CD8-positive, alpha-beta T cell (primary cell): ENCODE measurements at regions of chr18 and their contacts with region 1.

Region 1: GRCh38 chr18:48940854-48941611 is 9.7 kb downstream of the SMAD7 start:
- DNase-seq: peak; percentile 74 to 99 (median 90)
- ATAC-seq: peak; percentile 81
- H3K4me3 ChIP-seq: peak overlapping the region; percentile 20 to 49
- H3K4me3 Mint-ChIP-seq: peak overlapping the region; percentile 82
- H3K27ac ChIP-seq: peak overlapping the region; percentile 53 to 80
- H3K27ac Mint-ChIP-seq: peak overlapping the region; percentile 96
- H3K4me1 ChIP-seq: peaks cover 81% of the 10 kb centered on the region
- H3K4me1 Mint-ChIP-seq: peaks cover 93% of the 10 kb centered on the region
- H3K27me3 ChIP-seq: no peaks in the 10 kb centered on the region
- H3K27me3 Mint-ChIP-seq: no peaks in the 10 kb centered on the region
- CTCF ChIP-seq: no peak

Region 2: DNA sequence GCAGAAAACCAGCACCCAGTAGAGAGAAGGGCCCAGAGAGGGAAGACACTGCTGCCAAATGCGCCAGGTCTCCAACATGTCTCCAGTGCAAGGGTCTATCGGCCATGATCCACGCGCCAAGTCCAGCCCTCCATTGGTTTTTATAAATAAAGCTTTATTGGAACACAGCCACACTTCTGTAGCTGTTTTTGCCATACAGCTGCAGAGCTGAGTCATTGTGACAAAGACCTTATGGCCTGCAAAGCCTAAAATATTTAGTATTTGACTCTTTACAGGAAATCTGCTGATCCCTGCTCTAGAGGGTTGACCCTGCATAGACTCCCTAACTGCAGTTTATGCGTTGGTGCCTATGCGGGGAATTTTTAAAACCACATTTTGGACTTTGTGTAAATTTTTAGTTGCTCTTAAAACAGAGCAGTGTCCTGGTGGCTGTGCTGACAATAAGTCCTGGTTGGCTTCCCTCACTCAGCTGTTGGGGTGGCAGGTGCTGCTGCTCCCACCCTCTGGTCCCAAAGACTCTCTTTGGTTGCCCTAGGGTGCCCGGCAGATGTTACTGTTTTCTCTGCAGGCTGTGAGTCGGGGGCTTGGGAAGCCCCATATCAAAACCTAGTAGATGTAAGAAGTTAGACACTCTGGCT is 247.3 kb before region 1 on chr18:
- CTCF ChIA-PET with region 1: no interaction called
- POLR2A ChIA-PET with region 1: no interaction called
- intact Hi-C with region 1: no loop called
- DNase-seq: no peak
- ATAC-seq: no peak
- H3K4me3 ChIP-seq: no peak overlapping the region
- H3K4me3 Mint-ChIP-seq: no peak overlapping the region
- H3K27ac ChIP-seq: no peak overlapping the region
- H3K27ac Mint-ChIP-seq: no peak overlapping the region
- H3K4me1 ChIP-seq: no peaks in the 10 kb centered on the region
- H3K4me1 Mint-ChIP-seq: no peaks in the 10 kb centered on the region
- H3K27me3 ChIP-seq: no peaks in the 10 kb centered on the region
- H3K27me3 Mint-ChIP-seq: no peaks in the 10 kb centered on the region
- CTCF ChIP-seq: no peak

Region 3: DNA sequence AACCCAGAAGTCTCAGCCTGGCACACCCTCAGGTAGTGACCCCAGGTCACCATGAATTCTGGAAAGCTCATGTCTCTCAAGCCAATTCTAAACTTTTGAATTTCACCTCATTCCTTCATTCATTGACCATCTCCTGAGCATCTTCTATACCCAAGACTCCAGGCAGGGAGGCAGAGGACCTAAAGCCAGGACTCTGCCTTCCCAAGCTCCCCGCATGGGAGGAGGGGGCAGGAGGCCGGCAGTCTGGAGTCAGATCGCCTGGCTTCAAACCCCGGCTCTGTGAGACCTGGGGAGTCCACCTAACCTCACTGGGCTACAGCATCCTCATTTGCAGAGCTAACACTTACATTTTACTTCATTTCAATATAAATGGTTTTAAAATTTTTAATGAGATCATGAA is 49.3 kb before region 1 on chr18:
- CTCF ChIA-PET with region 1: no interaction called
- POLR2A ChIA-PET with region 1: no interaction called
- intact Hi-C with region 1: no loop called
- DNase-seq: no peak
- ATAC-seq: no peak
- H3K4me3 ChIP-seq: no peak overlapping the region
- H3K4me3 Mint-ChIP-seq: no peak overlapping the region
- H3K27ac ChIP-seq: no peak overlapping the region
- H3K27ac Mint-ChIP-seq: no peak overlapping the region
- H3K4me1 ChIP-seq: no peaks in the 10 kb centered on the region
- H3K4me1 Mint-ChIP-seq: peaks cover 2% of the 10 kb centered on the region
- H3K27me3 ChIP-seq: no peaks in the 10 kb centered on the region
- H3K27me3 Mint-ChIP-seq: no peaks in the 10 kb centered on the region
- CTCF ChIP-seq: no peak

Region 4: DNA sequence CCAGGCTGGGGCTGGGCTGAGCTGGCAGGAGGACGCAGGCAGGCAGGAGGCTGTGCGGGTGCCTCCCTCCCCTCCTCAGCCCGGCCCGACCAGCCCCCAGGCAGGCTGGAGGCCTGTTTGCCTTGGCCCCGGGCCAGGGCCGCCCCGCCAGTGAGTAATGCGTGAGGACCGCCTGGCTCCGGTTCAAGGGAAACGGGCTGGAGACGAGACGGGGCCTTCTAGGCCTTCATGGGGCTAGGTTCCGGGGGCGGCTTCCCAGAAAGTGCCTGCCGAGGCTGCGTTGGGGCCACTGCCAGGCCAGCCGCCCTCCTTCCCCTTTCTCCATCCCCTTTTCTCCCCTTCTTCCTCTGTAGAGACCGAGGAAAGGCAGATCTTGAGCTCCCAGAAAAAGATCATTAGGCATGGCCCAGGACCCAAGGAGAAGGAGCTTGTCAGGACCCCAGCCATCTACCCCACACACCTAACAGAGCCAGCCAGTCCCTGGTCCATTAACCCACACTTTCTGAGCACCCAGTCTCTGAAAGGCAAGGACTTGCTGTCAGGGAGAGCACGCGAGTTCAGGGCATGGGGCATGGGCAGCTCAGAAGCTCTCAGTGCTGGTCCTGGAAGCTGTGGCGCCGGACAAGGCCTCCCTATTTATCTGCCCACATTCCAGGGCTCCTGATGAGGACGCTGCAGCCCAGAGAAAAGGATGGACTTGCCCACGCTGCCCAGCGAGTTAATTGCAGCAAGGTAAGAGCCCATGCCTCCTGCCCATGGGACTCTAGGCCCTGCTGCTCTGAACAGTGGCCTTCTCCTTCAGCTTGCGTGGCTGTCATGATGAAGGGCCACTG is 38.8 kb before region 1 on chr18:
- CTCF ChIA-PET with region 1: no interaction called
- POLR2A ChIA-PET with region 1: no interaction called
- intact Hi-C with region 1: no loop called
- DNase-seq: no peak
- ATAC-seq: no peak
- H3K4me3 ChIP-seq: no peak overlapping the region
- H3K4me3 Mint-ChIP-seq: no peak overlapping the region
- H3K27ac ChIP-seq: no peak overlapping the region
- H3K27ac Mint-ChIP-seq: no peak overlapping the region
- H3K4me1 ChIP-seq: peaks cover 6% of the 10 kb centered on the region
- H3K4me1 Mint-ChIP-seq: peaks cover 10% of the 10 kb centered on the region
- H3K27me3 ChIP-seq: no peaks in the 10 kb centered on the region
- H3K27me3 Mint-ChIP-seq: no peaks in the 10 kb centered on the region
- CTCF ChIP-seq: no peak

Region 5: DNA sequence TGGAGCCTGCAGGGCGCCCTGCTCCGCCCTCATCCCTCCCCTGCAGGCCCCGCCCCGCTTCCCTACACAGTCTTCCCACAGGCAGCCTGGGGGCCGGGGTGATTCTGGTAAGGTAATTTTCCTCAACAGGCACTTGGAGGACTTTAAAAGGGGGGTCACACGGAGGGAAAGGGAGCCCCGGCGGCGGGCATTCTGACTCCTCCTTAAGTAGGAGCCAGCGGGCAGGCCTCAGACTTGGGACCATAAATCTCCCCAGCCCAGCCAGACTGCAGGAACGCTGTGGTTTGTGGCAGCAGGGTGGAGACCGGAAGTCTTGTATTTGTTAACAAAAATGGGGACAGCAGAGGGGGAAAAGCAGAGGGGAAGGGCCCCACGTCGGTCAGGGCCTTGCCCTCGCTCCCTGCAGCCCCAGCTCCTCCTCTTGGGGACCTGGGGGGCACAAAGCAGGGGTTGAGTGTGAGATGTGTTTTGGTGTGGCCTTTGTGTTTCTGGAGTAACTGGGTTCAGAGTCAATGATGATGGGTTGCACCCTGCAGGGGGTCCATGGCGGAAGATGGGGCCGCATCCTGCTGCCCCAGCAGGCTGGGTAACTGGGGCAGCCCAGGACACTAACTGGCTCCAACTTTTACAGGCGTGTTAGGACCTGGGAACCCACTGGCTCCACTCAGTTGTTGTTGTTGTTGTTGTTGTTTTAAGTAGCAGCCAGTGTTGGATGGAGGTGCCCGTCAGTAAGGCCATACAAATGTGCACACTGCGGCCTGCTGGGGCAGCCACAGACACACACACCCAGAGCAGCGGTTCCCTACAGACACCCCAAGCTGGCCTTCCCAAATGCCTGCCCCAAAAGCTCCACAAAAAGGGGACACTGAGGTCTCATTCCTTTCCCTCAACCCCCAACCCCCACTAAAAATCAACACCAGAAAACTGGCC is 18.0 kb before region 1 on chr18:
- CTCF ChIA-PET with region 1: interaction called, 6 read pairs
- POLR2A ChIA-PET with region 1: interaction called, 12 read pairs
- intact Hi-C with region 1: loop called in 1 of 2 experiments (anchors 1 kb)
- DNase-seq: peak in 2 of 9 experiments; percentile 51 to 54
- ATAC-seq: no peak
- H3K4me3 ChIP-seq: peak overlapping the region in 1 of 2 experiments; percentile 12
- H3K4me3 Mint-ChIP-seq: peak overlapping the region; percentile 70
- H3K27ac ChIP-seq: peak overlapping the region in 1 of 2 experiments; percentile 50
- H3K27ac Mint-ChIP-seq: peak overlapping the region; percentile 72
- H3K4me1 ChIP-seq: peaks cover 47% of the 10 kb centered on the region
- H3K4me1 Mint-ChIP-seq: peaks cover 67% of the 10 kb centered on the region
- H3K27me3 ChIP-seq: no peaks in the 10 kb centered on the region
- H3K27me3 Mint-ChIP-seq: no peaks in the 10 kb centered on the region
- CTCF ChIP-seq: no peak

Region 6: GRCh38 chr18:48928787-48929186 is 12.2 kb before region 1 on chr18:
- CTCF ChIA-PET with region 1: interaction called, 6 read pairs
- POLR2A ChIA-PET with region 1: interaction called, 12 read pairs
- intact Hi-C with region 1: loop called in 1 of 2 experiments (anchors 1 kb)
- DNase-seq: peak; percentile 60 to 91 (median 83)
- ATAC-seq: peak; percentile 92
- H3K4me3 ChIP-seq: no peak overlapping the region
- H3K4me3 Mint-ChIP-seq: peak overlapping the region; percentile 69
- H3K27ac ChIP-seq: peak overlapping the region in 1 of 2 experiments; percentile 70
- H3K27ac Mint-ChIP-seq: peak overlapping the region; percentile 91
- H3K4me1 ChIP-seq: peaks cover 67% of the 10 kb centered on the region
- H3K4me1 Mint-ChIP-seq: peaks cover 92% of the 10 kb centered on the region
- H3K27me3 ChIP-seq: no peaks in the 10 kb centered on the region
- H3K27me3 Mint-ChIP-seq: no peaks in the 10 kb centered on the region
- CTCF ChIP-seq: no peak

Region 7: DNA sequence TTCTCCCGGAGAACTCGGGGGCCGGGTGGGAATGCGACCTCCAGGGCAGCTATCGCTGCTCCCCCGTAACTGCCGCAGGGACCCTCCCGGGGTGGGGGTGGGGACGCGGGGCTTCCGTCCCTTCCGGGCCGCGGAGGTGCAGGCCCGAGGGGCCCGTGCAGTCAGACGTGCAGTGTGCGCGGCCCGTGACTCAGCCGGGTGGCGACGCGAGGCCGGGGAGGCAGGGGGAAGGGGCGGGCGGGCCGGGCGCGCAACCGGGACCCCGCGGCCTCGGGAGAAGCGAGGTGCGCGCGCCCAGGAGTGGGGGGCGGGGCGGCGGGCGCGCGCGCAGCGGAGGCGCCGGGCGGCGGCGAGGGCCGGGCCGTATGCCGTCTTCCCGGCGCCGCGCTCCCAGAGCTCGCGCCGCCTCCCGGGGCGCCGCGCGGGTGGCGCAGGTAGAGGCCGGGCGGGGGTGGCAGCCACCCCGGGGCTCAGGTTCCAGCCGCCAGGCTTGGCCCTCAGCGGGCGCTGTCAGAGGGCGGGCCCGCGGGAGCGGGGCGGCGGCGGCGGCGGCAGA is 34.7 kb after region 1 on chr18:
- CTCF ChIA-PET with region 1: no interaction called
- POLR2A ChIA-PET with region 1: no interaction called
- intact Hi-C with region 1: loop called in 1 of 2 experiments (anchors 5 kb)
- DNase-seq: peak in 8 of 9 experiments; percentile 28 to 77 (median 58)
- ATAC-seq: peak; percentile 77
- H3K4me3 ChIP-seq: peak overlapping the region; percentile 48 to 50
- H3K4me3 Mint-ChIP-seq: peak overlapping the region; percentile 59
- H3K27ac ChIP-seq: no peak overlapping the region
- H3K27ac Mint-ChIP-seq: no peak overlapping the region
- H3K4me1 ChIP-seq: peaks cover 11% of the 10 kb centered on the region
- H3K4me1 Mint-ChIP-seq: peaks cover 7% of the 10 kb centered on the region
- H3K27me3 ChIP-seq: no peaks in the 10 kb centered on the region
- H3K27me3 Mint-ChIP-seq: peaks cover 29% of the 10 kb centered on the region
- CTCF ChIP-seq: no peak

Region 8: DNA sequence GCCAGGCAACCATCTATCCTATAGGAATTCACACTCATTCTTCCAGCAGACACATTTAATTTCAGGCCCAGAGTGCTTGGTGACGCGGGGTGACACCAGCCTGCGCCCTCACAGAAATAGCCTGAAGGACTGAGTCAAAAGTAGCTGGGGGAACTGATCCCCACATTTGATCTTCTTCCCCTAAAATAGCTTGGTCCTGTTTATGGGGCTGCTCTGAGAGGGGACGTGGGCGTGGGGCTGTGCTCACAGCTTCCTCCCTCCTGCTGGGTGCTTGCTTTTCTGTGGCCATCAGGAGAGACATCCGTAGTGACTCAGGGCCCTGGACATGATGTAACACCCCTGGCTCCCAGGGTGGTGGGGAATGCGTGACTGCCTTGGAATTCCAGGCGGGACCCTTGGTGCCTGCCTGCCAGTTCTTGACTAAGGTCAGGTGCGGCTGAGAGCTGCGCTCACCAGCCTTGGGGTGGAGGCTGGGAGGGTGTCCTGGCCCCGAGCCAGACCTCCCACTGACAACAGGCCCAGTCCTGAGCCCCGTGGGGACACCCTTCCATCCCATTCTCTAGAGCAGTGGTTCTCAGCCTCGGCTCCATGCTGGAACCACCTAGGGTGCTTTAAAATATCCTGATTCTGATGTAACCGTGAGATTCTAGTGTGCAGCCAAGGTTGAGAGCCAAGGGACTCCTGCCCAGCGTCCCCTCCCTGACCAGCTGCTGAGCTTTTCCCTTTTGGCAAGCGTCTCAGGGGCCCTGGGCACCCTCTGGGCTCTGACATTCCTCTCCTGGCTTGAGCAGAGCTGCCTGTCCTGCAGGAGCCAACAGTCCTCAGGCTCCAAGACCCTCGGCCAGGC is 57.2 kb after region 1 on chr18:
- CTCF ChIA-PET with region 1: interaction called, 3 read pairs
- POLR2A ChIA-PET with region 1: no interaction called
- intact Hi-C with region 1: loop called in 1 of 2 experiments (anchors 1 kb)
- DNase-seq: no peak
- ATAC-seq: no peak
- H3K4me3 ChIP-seq: no peak overlapping the region
- H3K4me3 Mint-ChIP-seq: no peak overlapping the region
- H3K27ac ChIP-seq: no peak overlapping the region
- H3K27ac Mint-ChIP-seq: no peak overlapping the region
- H3K4me1 ChIP-seq: peaks cover 12% of the 10 kb centered on the region
- H3K4me1 Mint-ChIP-seq: peaks cover 15% of the 10 kb centered on the region
- H3K27me3 ChIP-seq: no peaks in the 10 kb centered on the region
- H3K27me3 Mint-ChIP-seq: peaks cover 2% of the 10 kb centered on the region
- CTCF ChIP-seq: no peak